Activated naive CD4-positive, alpha-beta T cell treated with anti-CD3 and anti-CD28 coated beads, Interleukin-2, amount 10 ng/mL, durations not matched to agents 7 days and 5 days (primary cell): ENCODE measurements at regions of chr17 and their contacts with region 1.

Region 1: GRCh38 chr17:78250891-78251794 is 19.7 kb downstream of the TMEM235 start:
- DNase-seq: peak; percentile 90
- H3K4me3 Mint-ChIP-seq: peak overlapping the region; percentile 83
- H3K27ac Mint-ChIP-seq: peak overlapping the region; percentile 95
- H3K4me1 Mint-ChIP-seq: peaks cover 50% of the 10 kb centered on the region
- H3K27me3 Mint-ChIP-seq: peaks cover 28% of the 10 kb centered on the region

Region 2: DNA sequence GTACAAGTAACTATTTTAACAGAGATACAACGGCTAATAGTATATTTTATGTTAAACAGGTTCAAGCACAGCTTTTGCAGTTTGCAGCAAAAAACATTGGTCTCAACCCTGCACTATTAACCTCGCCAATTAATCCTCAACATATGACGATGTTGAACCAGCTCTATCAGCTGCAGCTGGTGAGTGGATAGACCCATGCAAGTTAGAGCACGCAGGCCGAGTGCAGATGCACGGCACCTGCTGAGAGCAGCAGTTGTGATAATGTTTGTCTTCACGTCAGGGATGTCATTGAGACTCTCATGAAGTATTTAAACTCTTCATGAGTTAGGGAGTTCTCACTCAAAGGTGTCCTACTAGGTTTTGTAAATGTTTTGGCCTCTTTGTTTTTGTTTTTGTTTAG is 168.2 kb before region 1 on chr17:
- CTCF ChIA-PET with region 1: interaction called, 20 read pairs
- DNase-seq: no peak
- H3K4me3 Mint-ChIP-seq: no peak overlapping the region
- H3K27ac Mint-ChIP-seq: no peak overlapping the region
- H3K4me1 Mint-ChIP-seq: peaks cover 16% of the 10 kb centered on the region
- H3K27me3 Mint-ChIP-seq: no peaks in the 10 kb centered on the region

Region 3: GRCh38 chr17:78263063-78263743 is 12.1 kb after region 1 on chr17:
- CTCF ChIA-PET with region 1: interaction called, 18 read pairs
- DNase-seq: peak; percentile 67
- H3K4me3 Mint-ChIP-seq: no peak overlapping the region
- H3K27ac Mint-ChIP-seq: peak overlapping the region; percentile 90
- H3K4me1 Mint-ChIP-seq: peaks cover 52% of the 10 kb centered on the region
- H3K27me3 Mint-ChIP-seq: no peaks in the 10 kb centered on the region

Region 4: GRCh38 chr17:78289802-78290363 is 38.7 kb after region 1 on chr17:
- CTCF ChIA-PET with region 1: interaction called, 17 read pairs
- DNase-seq: peak; percentile 85
- H3K4me3 Mint-ChIP-seq: no peak overlapping the region
- H3K27ac Mint-ChIP-seq: no peak overlapping the region
- H3K4me1 Mint-ChIP-seq: peaks cover 6% of the 10 kb centered on the region
- H3K27me3 Mint-ChIP-seq: peaks cover 12% of the 10 kb centered on the region